MCF 10A (cell line): ENCODE measurements at regions of chr2 and their contacts with region 1.

Region 1: GRCh38 chr2:54115284-54116137 is at the start of gene ACYP2:
- DNase-seq: peak; percentile 94
- H3K4me3 Mint-ChIP-seq: peak within 1 kb of the TSS; percentile 88
- H3K27ac Mint-ChIP-seq: peak within 1 kb of the TSS; percentile 100
- H3K4me1 Mint-ChIP-seq: peaks cover 5% of the 10 kb centered on the region
- H3K27me3 Mint-ChIP-seq: no peaks in the 10 kb centered on the region
- CTCF ChIP-seq: no peak
- total RNA-seq, gene ACYP2: 14.3 and 17.8 TPM in 2 replicates

Region 2: GRCh38 chr2:54330162-54330925 is 214.8 kb after region 1 on chr2:
- CTCF ChIA-PET with region 1: no interaction called
- POLR2A ChIA-PET with region 1: interaction called, 13 read pairs
- intact Hi-C with region 1: loop called (anchors 10 kb)
- DNase-seq: peak; percentile 97
- H3K4me3 Mint-ChIP-seq: peak overlapping the region; percentile 94
- H3K27ac Mint-ChIP-seq: peak overlapping the region; percentile 89
- H3K4me1 Mint-ChIP-seq: peaks cover 13% of the 10 kb centered on the region
- H3K27me3 Mint-ChIP-seq: no peaks in the 10 kb centered on the region
- CTCF ChIP-seq: no peak